PC-9 (cell line): ENCODE measurements at regions of chr1 and their contacts with region 1.

Region 1: DNA sequence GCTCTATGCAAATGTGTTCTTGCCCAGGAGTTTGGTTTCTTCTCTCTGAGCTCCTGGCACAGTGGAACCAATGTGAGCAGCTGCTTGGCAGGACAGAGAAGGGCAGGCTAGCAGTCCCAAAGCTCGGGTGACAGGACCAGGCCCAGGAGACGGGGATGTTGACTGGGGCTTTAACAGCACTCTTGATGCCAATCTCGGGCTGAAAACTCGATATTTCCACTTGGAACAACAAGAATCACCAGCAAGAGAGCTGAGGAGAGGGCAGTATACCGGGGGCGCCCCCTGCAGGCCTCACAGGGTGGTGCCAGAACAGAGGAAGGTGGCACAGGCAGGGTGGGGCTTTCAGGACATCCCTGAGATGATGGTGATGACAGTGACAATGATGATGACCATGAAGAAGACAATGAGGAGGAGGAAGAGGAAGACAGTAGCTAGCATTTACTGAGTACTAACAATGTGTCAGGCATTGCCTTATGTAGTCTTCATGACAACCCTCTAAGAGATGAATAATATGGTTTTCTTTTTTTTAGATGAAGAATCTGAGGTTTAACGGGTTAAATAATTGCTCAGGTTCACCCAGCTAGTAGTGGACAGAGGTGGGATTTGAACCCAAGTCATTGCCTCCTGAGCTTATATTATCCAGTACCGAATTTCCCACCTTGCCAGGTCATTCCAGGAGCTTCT is 2.7 kb upstream of the KCNJ9 start:
- DNase-seq: peak in 1 of 2 experiments; percentile 59
- H3K4me3 ChIP-seq: no peak overlapping the region
- H3K27ac ChIP-seq: no peak overlapping the region
- H3K4me1 ChIP-seq: no peaks in the 10 kb centered on the region
- H3K27me3 ChIP-seq: peaks cover 38% of the 10 kb centered on the region
- CTCF ChIP-seq: peak; percentile 92

Region 2: DNA sequence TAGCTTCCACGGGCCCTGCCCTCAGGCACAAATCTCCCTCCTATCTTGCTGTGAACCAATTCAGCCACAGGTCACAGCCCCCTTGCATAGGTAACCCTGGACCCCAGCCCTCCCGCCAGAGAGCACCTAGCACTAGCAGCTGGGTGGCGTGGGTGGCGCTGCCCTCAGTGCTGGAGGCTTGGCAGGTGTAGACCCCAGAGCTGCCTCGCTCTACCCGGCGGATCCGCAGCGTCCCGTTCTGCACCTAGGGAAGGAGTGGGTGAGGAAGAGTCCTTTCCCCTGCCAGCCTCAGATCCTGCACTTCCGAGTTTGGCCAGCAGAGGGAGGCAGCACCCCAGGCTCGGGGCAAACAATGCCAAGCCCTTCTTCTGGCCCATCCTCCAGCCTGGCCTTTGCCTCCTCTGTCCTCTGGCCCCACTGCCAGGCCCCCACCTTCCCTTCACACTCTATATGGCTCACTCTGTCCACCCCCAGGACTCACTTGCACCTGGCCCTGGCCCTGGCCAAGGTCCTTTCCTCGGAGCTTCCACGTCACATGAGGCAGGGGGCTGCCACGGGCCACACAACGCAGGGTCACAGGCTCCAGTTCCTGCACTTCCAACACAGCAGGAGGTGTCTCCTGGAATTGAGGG is 142.3 kb before region 1 on chr1:
- CTCF ChIA-PET with region 1: no interaction called
- POLR2A ChIA-PET with region 1: no interaction called
- intact Hi-C with region 1: loop called (anchors 2 kb)
- DNase-seq: peak in 1 of 2 experiments; percentile 82
- H3K4me3 ChIP-seq: no peak overlapping the region
- H3K27ac ChIP-seq: peak overlapping the region; percentile 56; the same call in 1 of the 2 replicates
- H3K4me1 ChIP-seq: peaks cover 35% of the 10 kb centered on the region
- H3K27me3 ChIP-seq: no peaks in the 10 kb centered on the region
- CTCF ChIP-seq: peak; percentile 95

Region 3: DNA sequence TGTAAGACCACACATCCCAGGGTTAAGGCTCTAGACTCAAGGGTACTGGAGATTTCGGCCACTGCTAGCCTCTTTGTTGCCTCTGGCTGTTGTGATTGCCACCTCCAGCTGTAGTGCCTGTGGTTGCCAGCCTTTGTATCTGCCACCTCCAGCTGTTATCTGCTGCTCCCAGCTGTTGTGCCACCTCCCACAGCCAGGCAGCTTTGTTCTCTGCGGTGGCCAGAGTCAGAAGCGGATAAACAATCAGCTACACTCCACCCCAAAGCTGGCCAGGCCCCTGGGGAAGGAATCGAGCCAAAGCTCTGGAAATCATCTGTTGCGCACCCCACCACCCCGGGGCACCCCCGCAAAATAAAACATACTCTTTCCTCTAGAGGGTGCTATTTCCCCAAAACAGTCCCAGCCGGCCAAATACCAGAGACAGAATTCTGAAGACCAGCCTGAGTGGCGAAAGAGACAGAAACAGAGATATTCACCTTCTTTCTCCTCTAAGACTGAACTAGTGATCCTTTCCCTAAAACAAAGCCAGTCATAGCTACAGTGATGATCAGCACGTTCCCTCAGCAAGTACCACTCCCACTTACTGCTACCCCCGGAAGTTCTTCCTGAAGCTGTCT is 32.1 kb before region 1 on chr1:
- CTCF ChIA-PET with region 1: interaction called, 7 read pairs
- POLR2A ChIA-PET with region 1: no interaction called
- intact Hi-C with region 1: loop called (anchors 1 kb)
- DNase-seq: peak in 1 of 2 experiments; percentile 37
- H3K4me3 ChIP-seq: no peak overlapping the region
- H3K27ac ChIP-seq: no peak overlapping the region
- H3K4me1 ChIP-seq: peaks cover 11% of the 10 kb centered on the region
- H3K27me3 ChIP-seq: peaks cover 49% of the 10 kb centered on the region
- CTCF ChIP-seq: peak; percentile 73